ENCODE measurements at regions of chr7 and their contacts with region 1.

Region 1: DNA sequence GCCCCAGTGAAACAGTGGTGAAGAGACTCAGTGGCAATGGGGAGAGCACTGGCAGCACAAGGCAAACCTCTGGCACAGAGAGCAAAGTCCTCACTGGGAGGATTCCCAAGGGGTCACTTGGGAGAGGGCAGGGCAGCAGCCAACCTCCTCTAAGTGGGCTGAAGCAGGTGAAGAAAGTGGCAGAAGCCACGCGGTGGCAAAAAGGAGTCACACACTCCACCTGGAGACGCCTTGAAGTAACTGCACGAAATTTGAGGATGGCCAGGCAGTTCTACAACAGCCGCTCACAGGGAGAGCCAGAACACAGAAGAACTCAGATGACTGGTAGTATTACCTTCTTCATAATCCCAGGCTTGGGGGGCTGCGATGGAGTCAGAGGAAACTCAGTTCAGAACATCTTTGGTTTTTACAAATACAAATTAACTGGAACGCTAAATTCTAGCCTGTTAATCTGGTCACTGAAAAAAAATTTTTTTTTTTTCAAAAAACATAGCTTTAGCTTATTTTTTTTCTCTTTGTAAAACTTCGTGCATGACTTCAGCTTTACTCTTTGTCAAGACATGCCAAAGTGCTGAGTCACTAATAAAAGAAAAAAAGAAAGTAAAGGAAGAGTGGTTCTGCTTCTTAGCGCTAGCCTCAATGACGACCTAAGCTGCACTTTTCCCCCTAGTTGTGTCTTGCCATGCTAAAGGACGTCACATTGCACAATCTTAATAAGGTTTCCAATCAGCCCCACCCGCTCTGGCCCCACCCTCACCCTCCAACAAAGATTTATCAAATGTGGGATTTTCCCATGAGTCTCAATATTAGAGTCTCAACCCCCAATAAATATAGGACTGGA is 435 bp upstream of the IL6 start:
- DNase-seq: peak; percentile 70
- H3K4me3 Mint-ChIP-seq: peak overlapping the region; percentile 61
- H3K27ac Mint-ChIP-seq: peak overlapping the region; percentile 66
- H3K4me1 Mint-ChIP-seq: peaks cover 44% of the 10 kb centered on the region
- H3K27me3 Mint-ChIP-seq: peaks cover 30% of the 10 kb centered on the region

Region 2: DNA sequence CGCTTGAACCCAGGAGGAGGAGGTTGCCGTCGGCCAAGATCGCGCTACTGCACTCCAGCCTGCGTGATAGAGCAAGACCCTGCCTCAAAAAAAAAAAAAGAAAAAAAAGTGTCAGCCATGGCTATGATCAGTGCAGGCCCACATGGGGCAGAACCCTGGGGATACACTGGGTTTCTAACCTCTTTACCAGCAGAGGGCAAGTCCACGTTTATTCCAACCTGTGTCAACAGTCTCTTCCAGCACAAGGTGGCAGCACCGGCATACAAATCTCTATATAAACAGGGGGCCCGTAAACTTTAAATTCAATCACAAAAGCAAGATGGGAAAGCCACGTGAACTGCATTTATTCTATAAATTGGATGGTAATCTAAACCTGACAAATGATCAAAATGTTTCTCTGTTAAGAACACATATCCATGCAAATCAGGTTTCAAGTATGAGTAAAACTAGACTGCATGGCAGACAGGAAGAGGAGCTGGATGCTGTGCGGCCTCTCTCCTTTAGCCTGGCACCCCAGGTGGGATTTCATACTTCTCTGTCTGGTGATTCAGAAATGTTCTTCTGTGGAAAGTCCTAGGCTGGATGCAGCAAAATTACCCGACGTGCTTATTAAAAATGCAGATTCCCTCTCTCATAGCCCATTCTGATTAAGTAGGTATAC is 166.6 kb before region 1 on chr7:
- CTCF ChIA-PET with region 1: interaction called, 379 read pairs
- POLR2A ChIA-PET with region 1: interaction called, 48 read pairs
- DNase-seq: peak; percentile 78
- H3K4me3 Mint-ChIP-seq: no peak overlapping the region
- H3K27ac Mint-ChIP-seq: no peak overlapping the region
- H3K4me1 Mint-ChIP-seq: peaks cover 47% of the 10 kb centered on the region
- H3K27me3 Mint-ChIP-seq: peaks cover 18% of the 10 kb centered on the region

Region 3: DNA sequence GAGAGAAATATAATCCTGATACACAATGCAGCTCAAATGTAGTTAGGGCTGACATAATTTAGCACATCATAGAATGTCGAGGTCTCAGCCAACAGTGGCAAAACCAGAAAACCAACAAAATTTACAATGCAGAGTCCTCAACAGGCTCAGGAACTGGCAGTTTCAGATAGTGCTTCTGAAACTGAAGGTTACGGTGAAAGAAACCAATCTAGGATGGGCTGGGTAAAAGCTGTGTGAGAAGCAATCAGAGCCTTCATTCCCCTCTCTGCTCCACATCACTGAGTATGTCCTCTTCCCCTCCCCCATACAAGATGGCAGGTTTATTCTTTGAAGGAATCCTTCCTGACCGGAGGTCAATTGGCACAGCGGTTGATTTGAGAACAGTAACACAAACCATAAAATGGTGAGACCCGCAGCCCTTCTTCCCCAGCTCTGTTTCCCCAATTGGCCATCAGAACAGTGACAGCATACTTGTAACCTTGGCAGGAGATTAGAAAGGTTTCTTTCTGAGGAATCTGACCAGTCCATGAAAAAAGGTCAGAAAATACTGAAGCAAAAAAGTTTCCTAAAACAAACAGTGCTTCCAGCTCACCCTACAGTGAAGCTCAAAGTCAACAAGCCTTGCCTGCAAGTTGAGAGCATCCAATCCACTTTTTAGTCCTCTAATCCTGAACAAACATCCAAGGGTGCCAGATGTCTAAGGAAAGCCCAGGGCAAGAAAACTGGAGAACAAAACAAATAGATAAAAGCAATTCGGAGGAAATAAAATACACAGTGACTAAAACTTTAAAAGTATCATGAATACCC is 53.5 kb before region 1 on chr7:
- CTCF ChIA-PET with region 1: interaction called, 11 read pairs
- POLR2A ChIA-PET with region 1: interaction called, 3 read pairs
- DNase-seq: no peak
- H3K4me3 Mint-ChIP-seq: no peak overlapping the region
- H3K27ac Mint-ChIP-seq: peak overlapping the region; percentile 42
- H3K4me1 Mint-ChIP-seq: peaks cover 71% of the 10 kb centered on the region
- H3K27me3 Mint-ChIP-seq: peaks cover 3% of the 10 kb centered on the region

Region 4: DNA sequence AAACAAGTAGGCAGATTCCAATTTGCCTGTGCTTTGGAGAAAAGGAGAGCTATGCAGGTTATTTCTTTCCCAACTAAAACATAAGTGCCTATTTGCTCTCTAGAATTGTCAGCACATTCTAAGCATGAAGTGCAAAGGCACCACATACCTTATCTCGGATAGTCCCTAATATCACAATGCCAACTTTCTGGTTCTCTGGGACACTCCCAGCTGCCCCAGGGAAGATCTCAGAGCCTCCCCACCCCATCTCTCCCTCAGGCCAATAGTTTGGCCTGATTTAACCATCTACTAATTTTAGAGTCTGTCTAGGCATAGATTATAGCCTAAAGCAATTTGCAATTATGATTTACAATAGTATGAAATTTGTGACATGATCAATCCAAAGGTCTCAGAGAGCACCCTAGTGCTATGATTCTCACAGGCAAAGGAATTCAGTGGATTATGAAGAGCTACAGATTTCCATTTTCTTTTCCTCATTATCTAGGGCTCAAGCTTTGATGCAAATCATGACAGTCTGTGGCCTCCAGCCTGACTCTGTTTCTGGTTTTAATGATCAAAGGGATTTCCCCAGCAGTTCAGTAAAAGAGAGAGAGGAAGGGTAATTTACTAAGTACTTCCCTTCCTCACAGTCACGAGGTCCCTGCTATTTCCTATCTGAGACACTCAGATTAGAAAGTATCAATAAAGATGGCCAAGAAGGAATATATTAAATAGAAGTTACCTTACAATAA is 28.5 kb before region 1 on chr7:
- CTCF ChIA-PET with region 1: interaction called, 26 read pairs
- POLR2A ChIA-PET with region 1: interaction called, 5 read pairs
- DNase-seq: peak; percentile 26
- H3K4me3 Mint-ChIP-seq: peak overlapping the region; percentile 1
- H3K27ac Mint-ChIP-seq: peak overlapping the region; percentile 67
- H3K4me1 Mint-ChIP-seq: peaks cover 63% of the 10 kb centered on the region
- H3K27me3 Mint-ChIP-seq: peaks cover 2% of the 10 kb centered on the region

Measured in activated CD4-positive, alpha-beta memory T cell treated with anti-CD3 and anti-CD28 coated beads, Interleukin-2, amount 10 ng/mL, durations not matched to agents 7 days and 5 days (primary cell).